Naive thymus-derived CD8-positive, alpha-beta T cell (primary cell): ENCODE measurements at regions of chr1 and their contacts with region 1.

Region 1: DNA sequence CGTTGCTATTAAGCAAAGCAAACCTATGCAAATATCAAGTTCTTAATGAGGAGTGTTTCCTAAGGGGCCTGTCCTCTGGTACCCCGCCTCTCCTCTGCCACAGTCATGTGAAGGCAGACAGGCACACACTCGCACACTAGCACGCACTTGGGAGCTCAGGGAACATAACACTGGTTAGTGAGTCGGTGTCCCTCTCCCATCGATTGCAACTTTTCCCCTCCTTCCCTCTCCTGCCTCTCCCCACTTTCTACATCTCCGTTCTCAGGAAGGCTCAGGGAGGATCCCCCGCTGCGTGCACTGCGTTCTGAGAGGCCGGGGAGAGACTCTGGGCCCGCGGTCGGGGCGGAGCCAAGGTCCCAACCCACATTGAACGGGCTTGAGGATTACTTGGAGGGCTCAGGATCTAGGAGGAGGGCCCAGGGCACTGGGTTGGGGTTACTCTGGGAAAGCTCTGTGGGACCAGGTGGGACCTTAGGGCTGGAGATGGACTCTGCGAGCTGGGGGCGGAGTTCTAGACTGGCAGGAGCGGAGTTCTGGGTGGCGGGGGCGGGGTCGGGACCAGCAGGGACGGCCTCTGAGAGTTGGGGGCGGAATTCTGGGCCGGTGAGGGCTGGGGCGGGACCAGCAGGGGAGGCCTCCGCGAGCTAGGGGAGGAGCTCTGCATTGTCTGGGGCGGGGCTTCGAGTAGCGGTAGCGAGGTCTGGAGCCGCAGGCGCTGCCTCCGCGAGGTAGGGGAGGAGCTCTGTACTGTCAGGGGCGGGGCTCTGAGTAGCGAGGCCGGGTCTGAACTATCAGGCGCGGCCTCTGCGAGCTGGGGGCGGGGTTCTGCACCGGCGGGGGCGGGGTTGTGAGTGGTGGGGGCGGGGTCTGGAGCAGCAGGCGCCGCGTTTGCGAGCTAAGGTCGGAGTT is 533 bp upstream of the LEPR start:
- DNase-seq: peak; percentile 92 to 99 (median 98)
- ATAC-seq: peak; percentile 87 to 92
- H3K4me3 Mint-ChIP-seq: peak overlapping the region in 1 of 10 donors; percentile 96
- H3K27ac Mint-ChIP-seq: peak overlapping the region in 7 of 10 donors; percentile 85 to 98 (median 96)
- H3K4me1 Mint-ChIP-seq: peaks cover 5 to 23% (median 20%) of the 10 kb centered on the region in 4 donors
- H3K27me3 Mint-ChIP-seq: peaks cover 0 to 3% (median 0%) of the 10 kb centered on the region in 5 donors

Region 2: GRCh38 chr1:65254319-65255034 is 165.5 kb before region 1 on chr1:
- POLR2A ChIA-PET with region 1: interaction called, 14 read pairs
- DNase-seq: peak; percentile 74 to 89 (median 84)
- ATAC-seq: peak; percentile 95
- H3K4me3 Mint-ChIP-seq: peak overlapping the region; percentile 74 to 99 (median 91)
- H3K27ac Mint-ChIP-seq: peak overlapping the region in 5 of 10 donors; percentile 11 to 89 (median 83)
- H3K4me1 Mint-ChIP-seq: peaks cover 6 to 21% (median 17%) of the 10 kb centered on the region in 4 donors
- H3K27me3 Mint-ChIP-seq: peaks cover 0 to 8% (median 2%) of the 10 kb centered on the region in 5 donors

Region 3: DNA sequence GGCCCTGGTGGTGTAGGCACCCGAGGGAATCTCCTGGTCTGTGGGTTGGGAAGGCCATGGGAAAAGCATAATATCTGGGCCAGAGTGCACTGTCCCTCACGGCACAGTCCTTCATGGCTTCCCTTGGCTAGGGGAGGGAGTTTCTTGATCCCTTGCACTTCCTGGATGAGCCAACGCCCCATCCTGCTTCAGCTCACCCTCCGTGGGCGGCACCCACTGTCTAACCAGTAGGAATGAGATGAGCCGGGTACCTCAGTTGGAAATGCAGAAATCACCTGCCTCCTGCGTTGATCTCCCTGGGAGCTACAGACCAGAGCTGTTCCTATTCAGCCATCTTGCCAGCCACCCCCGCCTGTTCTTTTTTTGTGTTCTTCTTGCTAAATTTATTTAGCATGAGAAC is 134.9 kb after region 1 on chr1:
- POLR2A ChIA-PET with region 1: no interaction called
- DNase-seq: no peak
- ATAC-seq: no peak
- H3K4me3 Mint-ChIP-seq: no peak overlapping the region
- H3K27ac Mint-ChIP-seq: no peak overlapping the region
- H3K4me1 Mint-ChIP-seq: no peaks in the 10 kb centered on the region
- H3K27me3 Mint-ChIP-seq: peaks cover 0 to 8% (median 0%) of the 10 kb centered on the region in 5 donors